Activated T-helper 2 cell treated with anti-CD3 and anti-CD28 coated beads, Interferon-gamma antibody, Interleukin-2, Interleukin-4, amounts not matched to agents 10 μg/mL and 5 μg/mL and 100 μg/mL, durations not matched to agents 14 hours and 24 hours and 36 hours (primary cell): ENCODE measurements at regions of chr19 and their contacts with region 1.

Region 1: DNA sequence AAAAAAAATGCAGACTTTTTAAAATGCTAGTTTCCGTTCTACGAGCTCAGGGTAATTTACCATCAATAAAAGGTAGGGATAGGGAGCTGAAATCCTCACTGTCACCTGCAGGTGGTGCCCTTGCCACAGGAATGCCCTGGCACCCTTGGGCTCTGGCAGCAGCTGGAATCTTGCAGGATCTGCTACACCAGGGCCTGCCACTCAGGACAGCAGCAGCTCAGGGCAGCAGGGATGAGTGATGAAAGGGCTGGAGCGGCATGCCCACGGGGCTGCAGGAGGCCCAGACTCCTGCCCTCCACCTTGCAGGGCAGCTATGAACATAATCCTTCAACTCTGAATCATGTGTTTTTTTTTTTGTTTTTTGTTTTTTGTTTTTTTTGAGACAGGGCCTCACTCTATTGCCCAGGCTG is 54.0 kb downstream of the GNG7 start:
- DNase-seq: peak; percentile 58
- H3K4me3 Mint-ChIP-seq: no peak overlapping the region
- H3K27ac Mint-ChIP-seq: no peak overlapping the region
- H3K4me1 Mint-ChIP-seq: no peaks in the 10 kb centered on the region
- H3K27me3 Mint-ChIP-seq: no peaks in the 10 kb centered on the region

Region 2: DNA sequence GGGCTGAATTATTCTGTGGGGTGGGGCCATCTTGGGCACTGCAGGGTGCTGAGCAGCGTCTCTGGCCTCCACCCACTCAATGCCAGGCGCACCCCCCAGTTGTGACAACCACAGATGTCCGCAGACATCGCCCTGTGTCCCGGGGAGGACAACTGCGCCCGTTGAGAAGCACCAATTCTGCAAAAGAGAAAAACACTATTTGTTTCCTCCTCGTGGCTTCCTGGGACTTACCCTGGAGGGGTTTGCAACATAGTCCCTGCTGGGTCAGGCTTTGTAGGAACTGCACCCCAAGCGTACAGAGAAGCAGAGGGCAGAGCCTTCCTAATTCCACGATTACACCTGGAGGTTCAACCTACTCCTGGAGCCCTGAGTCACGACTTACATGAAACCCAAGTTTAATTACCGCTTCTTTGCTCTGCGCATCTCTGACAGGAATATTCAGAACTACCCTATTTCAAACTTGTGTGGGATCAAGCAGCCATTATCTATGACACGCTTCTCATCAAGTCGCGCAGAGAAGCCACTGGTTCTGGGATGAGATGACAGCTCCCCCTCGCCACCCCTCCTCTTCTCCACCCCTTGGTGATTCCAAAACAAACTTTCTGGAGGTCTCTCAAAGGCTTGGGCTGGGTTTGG is 102.4 kb after region 1 on chr19:
- intact Hi-C with region 1: loop called (anchors 1 kb)
- DNase-seq: no peak
- H3K4me3 Mint-ChIP-seq: no peak overlapping the region
- H3K27ac Mint-ChIP-seq: no peak overlapping the region
- H3K4me1 Mint-ChIP-seq: peaks cover 6% of the 10 kb centered on the region
- H3K27me3 Mint-ChIP-seq: no peaks in the 10 kb centered on the region